ENCODE measurements at regions of chr18 and their contacts with region 1.

Region 1: GRCh38 chr18:63578357-63578958 is 8.7 kb upstream of the SERPINB13 start:
- DNase-seq: peak; percentile 28
- ATAC-seq: peak; percentile 51
- H3K4me3 Mint-ChIP-seq: no peak overlapping the region
- H3K27ac Mint-ChIP-seq: no peak overlapping the region
- H3K4me1 Mint-ChIP-seq: no peaks in the 10 kb centered on the region
- H3K27me3 Mint-ChIP-seq: peaks cover 9% of the 10 kb centered on the region
- CTCF ChIP-seq: peak; percentile 63

Region 2: GRCh38 chr18:63511286-63511685 is 67.2 kb before region 1 on chr18:
- CTCF ChIA-PET with region 1: interaction called, 125 read pairs
- POLR2A ChIA-PET with region 1: no interaction called
- intact Hi-C with region 1: loop called (anchors 5 kb)
- DNase-seq: peak; percentile 13
- ATAC-seq: no peak
- H3K4me3 Mint-ChIP-seq: no peak overlapping the region
- H3K27ac Mint-ChIP-seq: no peak overlapping the region
- H3K4me1 Mint-ChIP-seq: no peaks in the 10 kb centered on the region
- H3K27me3 Mint-ChIP-seq: peaks cover 13% of the 10 kb centered on the region
- CTCF ChIP-seq: peak; percentile 44

Region 3: GRCh38 chr18:63523660-63524059 is 54.8 kb before region 1 on chr18:
- CTCF ChIA-PET with region 1: interaction called, 125 read pairs
- POLR2A ChIA-PET with region 1: no interaction called
- intact Hi-C with region 1: loop called (anchors 5 kb)
- DNase-seq: no peak
- ATAC-seq: no peak
- H3K4me3 Mint-ChIP-seq: no peak overlapping the region
- H3K27ac Mint-ChIP-seq: no peak overlapping the region
- H3K4me1 Mint-ChIP-seq: no peaks in the 10 kb centered on the region
- H3K27me3 Mint-ChIP-seq: peaks cover 10% of the 10 kb centered on the region
- CTCF ChIP-seq: no peak

Region 4: DNA sequence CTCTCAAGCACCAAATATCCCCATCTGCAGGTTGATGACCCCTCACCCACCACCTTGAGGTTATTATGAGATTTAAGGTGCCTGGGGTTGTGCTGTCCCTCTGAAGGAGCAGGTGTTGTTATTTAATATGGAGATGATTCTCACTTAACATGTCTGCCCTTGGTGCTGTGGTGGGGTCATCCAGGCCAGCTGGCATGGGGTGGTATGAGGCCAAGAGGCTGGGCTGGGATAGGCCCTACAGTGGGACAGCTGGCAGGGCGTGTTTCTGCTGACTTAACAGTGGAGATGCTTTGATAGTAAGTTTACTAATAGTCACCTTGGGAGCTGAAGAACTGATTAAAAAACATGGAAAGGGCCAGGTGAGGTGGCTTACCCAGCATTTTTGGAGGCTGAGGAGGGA is 13.9 kb before region 1 on chr18:
- CTCF ChIA-PET with region 1: interaction called, 40 read pairs
- POLR2A ChIA-PET with region 1: no interaction called
- intact Hi-C with region 1: no loop called
- DNase-seq: no peak
- ATAC-seq: no peak
- H3K4me3 Mint-ChIP-seq: no peak overlapping the region
- H3K27ac Mint-ChIP-seq: no peak overlapping the region
- H3K4me1 Mint-ChIP-seq: no peaks in the 10 kb centered on the region
- H3K27me3 Mint-ChIP-seq: peaks cover 6% of the 10 kb centered on the region
- CTCF ChIP-seq: no peak

Region 5: GRCh38 chr18:63788447-63789096 is 210.1 kb after region 1 on chr18:
- CTCF ChIA-PET with region 1: no interaction called
- POLR2A ChIA-PET with region 1: no interaction called
- intact Hi-C with region 1: no loop called
- DNase-seq: peak; percentile 83
- ATAC-seq: peak; percentile 99
- H3K4me3 Mint-ChIP-seq: no peak overlapping the region
- H3K27ac Mint-ChIP-seq: no peak overlapping the region
- H3K4me1 Mint-ChIP-seq: peaks cover 4% of the 10 kb centered on the region
- H3K27me3 Mint-ChIP-seq: no peaks in the 10 kb centered on the region
- CTCF ChIP-seq: no peak